Activated CD8-positive, alpha-beta memory T cell treated with anti-CD3 and anti-CD28 coated beads, Interleukin-2, amount 10 ng/mL, durations not matched to agents 7 days and 5 days (primary cell): ENCODE measurements at regions of chr16 and their contacts with region 1.

Region 1: GRCh38 chr16:11224096-11224893 is 31.7 kb downstream of the SOCS1 start:
- DNase-seq: peak; percentile 93
- ATAC-seq: peak; percentile 76
- H3K4me3 Mint-ChIP-seq: peak overlapping the region; percentile 65
- H3K27ac Mint-ChIP-seq: peak overlapping the region; percentile 99
- H3K4me1 Mint-ChIP-seq: peaks cover 71% of the 10 kb centered on the region
- H3K27me3 Mint-ChIP-seq: no peaks in the 10 kb centered on the region

Region 2: DNA sequence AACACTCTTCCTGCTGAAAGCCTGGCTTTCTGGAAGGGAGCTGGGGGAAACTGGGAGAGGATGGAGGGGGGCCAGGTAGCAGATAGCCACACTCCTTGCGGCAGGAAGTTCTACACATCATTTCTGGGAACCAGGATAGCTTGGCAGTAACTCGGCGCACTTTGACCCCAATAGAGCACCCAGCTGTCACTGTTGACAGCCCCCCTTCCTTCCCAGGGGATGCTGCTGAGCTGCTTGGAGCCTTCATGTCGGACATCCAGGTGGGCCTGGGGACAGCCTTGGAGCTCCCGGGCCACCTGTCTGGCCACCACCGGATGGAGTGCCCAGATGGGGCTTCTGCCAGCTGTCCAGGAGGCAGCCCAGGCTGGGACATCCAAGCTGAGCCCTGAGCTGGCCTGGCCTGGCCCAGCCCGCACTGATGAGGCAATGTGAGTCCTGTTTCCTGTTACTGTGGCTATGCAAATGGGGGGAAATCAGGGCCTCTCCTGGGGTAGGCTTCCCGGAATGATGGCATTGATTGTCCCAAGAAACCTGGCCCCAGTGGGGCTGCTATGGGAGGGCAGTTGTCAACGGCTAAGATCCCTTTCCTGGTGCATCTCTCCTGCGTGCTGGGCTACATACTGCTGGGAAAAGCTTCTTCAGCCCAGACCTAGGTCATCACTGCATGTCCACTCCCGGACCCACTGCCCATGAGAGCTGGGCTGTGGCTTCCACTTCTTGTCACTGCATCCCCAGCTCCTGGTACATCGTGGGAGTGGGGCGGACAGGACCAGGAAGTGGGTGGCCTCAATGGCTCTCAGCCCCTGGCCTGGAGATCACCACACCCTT is 18.3 kb before region 1 on chr16:
- CTCF ChIA-PET with region 1: interaction called, 20 read pairs
- DNase-seq: no peak
- ATAC-seq: peak; percentile 46
- H3K4me3 Mint-ChIP-seq: no peak overlapping the region
- H3K27ac Mint-ChIP-seq: peak overlapping the region; percentile 89
- H3K4me1 Mint-ChIP-seq: peaks cover 45% of the 10 kb centered on the region
- H3K27me3 Mint-ChIP-seq: no peaks in the 10 kb centered on the region